Heart right ventricle (tissue), 16 donors: ENCODE measurements at regions of chr19 and their contacts with region 1.

Region 1: GRCh38 chr19:12736995-12737834 is at the start of gene GET3:
- DNase-seq: peak; percentile 75 to 96
- ATAC-seq: peak; percentile 87 to 95 (median 92)
- H3K4me3 ChIP-seq: peak within 1 kb of the TSS; percentile 68 to 93 (median 78)
- H3K27ac ChIP-seq: peak within 1 kb of the TSS; percentile 83 to 98 (median 92)
- H3K4me1 ChIP-seq: peaks cover 19 to 51% (median 39%) of the 10 kb centered on the region in 9 donors
- H3K27me3 ChIP-seq: no peaks in the 10 kb centered on the region
- CTCF ChIP-seq: no peak
- total RNA-seq, gene GET3: 50.6 to 79.7 (median 60.1) TPM

Region 2: DNA sequence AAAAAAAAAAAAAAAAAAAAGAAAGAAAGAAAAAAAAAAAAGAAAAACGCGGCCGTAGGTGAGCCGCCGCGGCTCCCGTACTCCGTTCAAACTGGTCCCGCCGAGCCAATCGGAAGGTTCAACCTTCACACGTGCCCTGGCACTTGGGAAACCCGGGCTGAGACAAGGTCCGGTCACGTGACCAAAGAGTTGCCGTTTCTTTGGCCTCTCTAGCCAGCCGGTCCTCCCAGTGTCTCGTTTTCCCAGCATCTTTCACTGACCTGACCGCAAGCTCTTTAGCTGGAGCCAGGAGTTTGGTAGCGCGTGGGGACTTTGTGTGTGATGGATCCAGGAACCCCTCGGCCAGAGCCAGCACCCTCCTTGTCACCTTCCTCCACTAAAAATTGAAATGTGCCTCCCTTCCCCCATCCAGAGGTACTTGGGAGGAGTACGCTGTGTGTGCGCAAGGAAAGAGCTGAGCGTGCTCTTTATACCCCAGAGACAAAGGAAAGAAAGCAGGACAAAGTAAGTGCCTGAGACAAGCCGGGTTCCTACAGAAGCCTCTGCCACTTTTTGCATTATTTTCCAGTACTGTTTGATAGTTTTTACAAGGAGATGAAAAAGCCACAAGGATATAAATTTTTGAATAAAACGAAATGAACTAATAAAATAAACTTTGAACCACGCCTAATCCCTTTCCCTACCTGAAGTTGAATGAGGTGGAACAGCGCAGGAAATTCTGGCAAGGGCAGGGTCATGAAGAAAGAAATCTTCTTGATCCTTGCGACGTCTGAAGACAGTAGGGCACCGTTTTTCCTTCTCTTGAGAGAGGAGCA is 14.4 kb before region 1 on chr19:
- intact Hi-C with region 1: loop called in 2 of 10 experiments (anchors 1 to 2 kb)
- DNase-seq: peak; percentile 93 to 99
- ATAC-seq: peak; percentile 87 to 97 (median 94)
- H3K4me3 ChIP-seq: peak overlapping the region; percentile 58 to 83 (median 70)
- H3K27ac ChIP-seq: peak overlapping the region; percentile 89 to 97 (median 94)
- H3K4me1 ChIP-seq: peaks cover 7 to 50% (median 34%) of the 10 kb centered on the region in 9 donors
- H3K27me3 ChIP-seq: no peaks in the 10 kb centered on the region
- CTCF ChIP-seq: no peak

Region 3: GRCh38 chr19:12777217-12778016 is 40.2 kb after region 1 on chr19:
- intact Hi-C with region 1: loop called in 1 of 10 experiments (anchors 2 kb)
- DNase-seq: peak; percentile 80 to 87
- ATAC-seq: peak; percentile 39 to 69 (median 53)
- H3K4me3 ChIP-seq: peak overlapping the region; percentile 48 to 78 (median 70)
- H3K27ac ChIP-seq: peak overlapping the region; percentile 85 to 99 (median 97)
- H3K4me1 ChIP-seq: peaks cover 21 to 69% (median 49%) of the 10 kb centered on the region in 9 donors
- H3K27me3 ChIP-seq: no peaks in the 10 kb centered on the region
- CTCF ChIP-seq: peak; percentile 94 to 99 (median 98)